H1 (cell line): ENCODE measurements at regions of chr3 and their contacts with region 1.

Region 1: GRCh38 chr3:9503283-9503682 is 50.3 kb downstream of the LHFPL4 start:
- DNase-seq: peak; percentile 83 to 97
- H3K4me3 ChIP-seq: no peak overlapping the region
- H3K27ac ChIP-seq: no peak overlapping the region
- H3K4me1 ChIP-seq: peaks cover 0 to 6% (median 3%) of the 10 kb centered on the region in 4 experiments; a peak in 4 of 7 replicates
- H3K27me3 ChIP-seq: peaks cover 0 to 10% (median 5%) of the 10 kb centered on the region in 4 experiments; a peak in 4 of 7 replicates
- CTCF ChIP-seq: peak in 2 of 3 experiments; percentile 91 to 96; a peak in 3 of 4 replicates
- EP300 ChIP-seq: no peak
- POLR2A ChIP-seq: no peak
- RAD21 ChIP-seq: peak; percentile 97 to 99

Region 2: GRCh38 chr3:9298236-9298635 is 205.0 kb before region 1 on chr3:
- CTCF ChIA-PET with region 1: no interaction called
- POLR2A ChIA-PET with region 1: no interaction called
- DNase-seq: no peak
- H3K4me3 ChIP-seq: no peak overlapping the region
- H3K27ac ChIP-seq: no peak overlapping the region
- H3K4me1 ChIP-seq: peaks cover 0 to 5% (median 3%) of the 10 kb centered on the region in 4 experiments; a peak in 5 of 7 replicates
- H3K27me3 ChIP-seq: peaks cover 0 to 2% (median under 1%) of the 10 kb centered on the region in 4 experiments; a peak in 1 of 7 replicates
- CTCF ChIP-seq: no peak
- EP300 ChIP-seq: no peak
- POLR2A ChIP-seq: no peak
- RAD21 ChIP-seq: no peak

Region 3: GRCh38 chr3:9352917-9353752 is 150.1 kb before region 1 on chr3:
- CTCF ChIA-PET with region 1: interaction called, 29 read pairs
- POLR2A ChIA-PET with region 1: interaction called, 3 read pairs
- DNase-seq: peak; percentile 34 to 74
- H3K4me3 ChIP-seq: no peak overlapping the region
- H3K27ac ChIP-seq: peak overlapping the region; percentile 76
- H3K4me1 ChIP-seq: peaks cover 10 to 30% (median 16%) of the 10 kb centered on the region in 4 experiments
- H3K27me3 ChIP-seq: no peaks in the 10 kb centered on the region
- CTCF ChIP-seq: peak; percentile 56 to 90 (median 80)
- EP300 ChIP-seq: no peak
- POLR2A ChIP-seq: no peak
- RAD21 ChIP-seq: peak; percentile 86 to 88

Region 4: DNA sequence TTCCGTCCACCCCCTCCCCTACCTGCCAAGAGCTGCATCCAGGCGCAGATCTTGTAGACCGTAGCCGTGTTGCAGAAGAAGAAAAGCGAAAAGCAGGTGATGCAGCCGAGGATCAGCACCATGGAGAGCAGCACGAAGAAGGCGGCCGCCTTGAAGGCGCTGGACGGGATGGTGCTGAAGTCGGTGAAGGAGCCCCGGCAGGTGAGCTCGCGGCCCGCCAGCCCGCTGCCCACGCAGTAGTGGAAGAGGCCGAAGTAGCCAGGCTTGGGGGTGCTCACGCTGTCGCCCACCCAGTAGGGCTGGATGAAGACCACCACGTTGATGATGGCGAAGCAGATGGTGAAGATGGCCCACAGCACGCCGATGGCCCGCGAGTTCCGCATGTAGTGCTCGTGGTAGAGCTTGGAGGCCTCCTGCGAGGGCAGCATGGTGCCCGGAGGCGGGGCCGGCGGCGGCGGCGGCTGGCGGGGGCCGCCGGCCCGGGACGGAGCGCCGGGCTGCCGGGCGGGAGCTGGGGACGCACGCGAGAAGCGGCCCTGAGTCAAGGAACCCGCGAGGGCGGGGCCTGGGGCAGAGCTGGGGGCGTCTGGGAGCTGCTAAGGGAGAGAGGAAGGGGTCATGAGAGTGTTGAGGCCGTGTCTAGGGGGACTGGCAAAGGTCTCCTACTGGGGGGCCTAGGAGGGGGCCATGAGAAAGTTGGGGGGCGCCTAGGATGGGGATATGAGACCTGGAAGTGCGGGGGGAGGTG is 49.1 kb after region 1 on chr3:
- CTCF ChIA-PET with region 1: interaction called, 21 read pairs
- POLR2A ChIA-PET with region 1: no interaction called
- DNase-seq: peak; percentile 75 to 92
- H3K4me3 ChIP-seq: peak overlapping the region; percentile 64 to 92 (median 72)
- H3K27ac ChIP-seq: no peak overlapping the region
- H3K4me1 ChIP-seq: peaks cover 3 to 11% (median 6%) of the 10 kb centered on the region in 4 experiments
- H3K27me3 ChIP-seq: peaks cover 0 to 5% (median 0%) of the 10 kb centered on the region in 4 experiments; a peak in 1 of 7 replicates
- CTCF ChIP-seq: no peak
- EP300 ChIP-seq: no peak
- POLR2A ChIP-seq: no peak
- RAD21 ChIP-seq: peak; percentile 7 to 11; a peak in 2 of 4 replicates

Region 5: GRCh38 chr3:9649791-9650521 is 146.7 kb after region 1 on chr3:
- CTCF ChIA-PET with region 1: interaction called, 43 read pairs
- POLR2A ChIA-PET with region 1: interaction called, 3 read pairs
- DNase-seq: no peak
- H3K4me3 ChIP-seq: peak overlapping the region; percentile 90 to 99 (median 94)
- H3K27ac ChIP-seq: peak overlapping the region; percentile 67
- H3K4me1 ChIP-seq: peaks cover 2 to 6% (median 3%) of the 10 kb centered on the region in 4 experiments; a peak in 3 of 7 replicates
- H3K27me3 ChIP-seq: no peaks in the 10 kb centered on the region
- CTCF ChIP-seq: no peak
- EP300 ChIP-seq: no peak
- POLR2A ChIP-seq: no peak
- RAD21 ChIP-seq: no peak

Region 6: GRCh38 chr3:9690451-9691450 is 187.5 kb after region 1 on chr3:
- CTCF ChIA-PET with region 1: interaction called, 48 read pairs
- POLR2A ChIA-PET with region 1: no interaction called
- DNase-seq: no peak
- H3K4me3 ChIP-seq: no peak overlapping the region
- H3K27ac ChIP-seq: no peak overlapping the region
- H3K4me1 ChIP-seq: no peaks in the 10 kb centered on the region
- H3K27me3 ChIP-seq: no peaks in the 10 kb centered on the region
- CTCF ChIP-seq: no peak
- EP300 ChIP-seq: no peak
- POLR2A ChIP-seq: no peak
- RAD21 ChIP-seq: no peak

Region 7: GRCh38 chr3:9749645-9750555 is 246.6 kb after region 1 on chr3 and contains the start of gene OGG1:
- CTCF ChIA-PET with region 1: interaction called, 10 read pairs
- POLR2A ChIA-PET with region 1: interaction called, 3 read pairs
- DNase-seq: peak; percentile 91 to 93
- H3K4me3 ChIP-seq: peak within 1 kb of the TSS; percentile 73 to 92 (median 88)
- H3K27ac ChIP-seq: peak within 1 kb of the TSS; percentile 88
- H3K4me1 ChIP-seq: peaks cover 0 to 9% (median 6%) of the 10 kb centered on the region in 4 experiments; a peak in 4 of 7 replicates
- H3K27me3 ChIP-seq: no peaks in the 10 kb centered on the region
- CTCF ChIP-seq: peak in 1 of 3 experiments; percentile 1; a peak in 1 of 4 replicates
- EP300 ChIP-seq: no peak
- POLR2A ChIP-seq: peak in 1 of 2 experiments; percentile 82; a peak in 2 of 3 replicates
- RAD21 ChIP-seq: 0 out of 4 replicates have a peak, but pooled peaks of 1 of the 2 experiments have one; percentile 3
- total RNA-seq, gene OGG1: 29.6 and 31.2 TPM in 2 replicates